Dendritic cell treated with granulocyte-macrophage colony-stimulating factor and Interleukin-4, amounts not matched to agents 40 ng/mL and 50 ng/mL, for 4 days (primary cell): ENCODE measurements at regions of chr1 and their contacts with region 1.

Region 1: DNA sequence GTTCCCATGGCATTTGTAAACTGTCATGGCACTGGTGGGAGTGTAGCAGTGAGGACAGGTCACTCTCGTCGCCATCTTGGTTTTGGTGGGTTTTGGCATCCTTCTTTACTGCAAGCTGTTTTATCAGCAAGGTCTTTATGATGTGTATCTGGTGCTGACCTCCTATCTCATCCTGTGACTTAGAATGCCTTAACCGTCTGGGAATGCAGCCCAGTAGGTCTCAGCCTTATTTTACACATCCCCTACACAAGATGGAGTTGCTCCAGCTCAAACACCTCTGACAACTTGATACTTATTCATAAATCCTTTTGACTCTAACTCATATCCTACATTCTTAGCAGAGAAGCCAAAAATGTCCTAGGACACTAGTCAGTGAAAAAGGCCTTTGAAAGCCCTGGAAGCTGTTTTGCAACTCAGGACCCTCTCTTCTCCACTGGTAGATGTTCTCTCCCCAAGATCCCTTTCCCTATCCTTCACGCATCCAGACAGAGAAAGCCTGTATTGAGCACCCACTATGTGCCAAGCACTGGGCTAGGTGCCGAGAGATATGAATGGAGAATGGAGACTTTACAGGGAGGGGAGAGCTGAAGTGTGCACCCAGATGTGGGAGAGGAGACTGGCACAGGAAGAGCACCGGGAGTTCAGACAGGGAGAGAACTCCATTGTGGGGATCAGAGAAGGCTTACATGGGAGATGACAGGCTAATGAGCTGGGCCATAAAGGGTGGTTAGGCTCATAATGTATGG is 6.7 kb upstream of the CSRP1 start:
- H3K4me3 Mint-ChIP-seq: no peak overlapping the region
- H3K27ac Mint-ChIP-seq: no peak overlapping the region
- H3K4me1 Mint-ChIP-seq: peaks cover 36% of the 10 kb centered on the region
- H3K27me3 Mint-ChIP-seq: no peaks in the 10 kb centered on the region

Region 2: DNA sequence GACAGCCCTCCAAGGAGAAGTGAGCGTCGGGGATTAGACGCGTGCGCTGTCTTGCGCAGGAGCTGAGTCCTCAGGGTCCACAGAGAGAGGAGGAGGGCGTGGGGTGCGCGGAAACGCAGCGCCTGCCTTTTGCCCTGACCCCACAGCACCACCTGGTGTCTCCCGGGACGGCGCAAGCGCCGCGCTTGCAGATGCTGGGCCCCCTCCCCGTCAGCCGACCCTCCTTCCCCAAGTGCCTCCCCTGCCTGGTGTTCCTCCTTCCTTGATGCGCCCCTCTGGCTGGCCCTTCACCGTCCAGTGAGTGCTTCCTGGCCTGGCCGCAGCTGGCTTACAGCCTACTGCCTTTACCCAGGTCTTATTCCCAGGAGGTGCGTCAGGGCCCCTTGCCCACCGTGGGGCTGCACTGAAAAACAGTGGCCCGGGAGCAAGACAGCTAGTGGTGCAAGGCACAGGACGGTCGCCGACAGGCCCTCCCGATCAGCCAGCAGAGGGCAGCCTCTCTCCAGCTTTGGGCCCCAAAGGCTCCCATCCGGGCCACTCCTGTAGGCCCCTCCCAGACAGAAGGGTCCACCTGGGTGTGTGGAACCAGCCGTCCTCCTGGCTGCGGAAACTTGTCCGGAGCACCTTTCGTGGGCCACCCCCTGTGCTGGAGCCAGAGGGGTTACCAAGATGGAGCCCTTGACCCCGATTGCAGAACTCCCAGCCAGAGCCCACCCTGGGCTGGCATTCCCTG is 31.7 kb before region 1 on chr1:
- intact Hi-C with region 1: loop called (anchors 1 kb)
- H3K4me3 Mint-ChIP-seq: peak overlapping the region; percentile 75
- H3K27ac Mint-ChIP-seq: peak overlapping the region; percentile 73
- H3K4me1 Mint-ChIP-seq: peaks cover 49% of the 10 kb centered on the region
- H3K27me3 Mint-ChIP-seq: peaks cover 9% of the 10 kb centered on the region

Region 3: GRCh38 chr1:201640624-201641023 is 127.0 kb after region 1 on chr1:
- intact Hi-C with region 1: no loop called
- H3K4me3 Mint-ChIP-seq: no peak overlapping the region
- H3K27ac Mint-ChIP-seq: no peak overlapping the region
- H3K4me1 Mint-ChIP-seq: no peaks in the 10 kb centered on the region
- H3K27me3 Mint-ChIP-seq: no peaks in the 10 kb centered on the region